Activated CD8-positive, alpha-beta T cell treated with anti-CD3 and anti-CD28 coated beads, Interleukin-2, amount 10 ng/mL, durations not matched to agents 7 days and 5 days (primary cell): ENCODE measurements at regions of chr5 and their contacts with region 1.

Region 1: GRCh38 chr5:96876292-96876850 is at the start of gene ERAP2:
- DNase-seq: no peak
- ATAC-seq: peak; percentile 73
- H3K4me3 Mint-ChIP-seq: peak within 1 kb of the TSS; percentile 98
- H3K27ac Mint-ChIP-seq: peak within 1 kb of the TSS; percentile 94
- H3K4me1 Mint-ChIP-seq: peaks cover 64% of the 10 kb centered on the region
- H3K27me3 Mint-ChIP-seq: no peaks in the 10 kb centered on the region
- total RNA-seq, gene ERAP2: 93.0 to 96.0 TPM

Region 2: GRCh38 chr5:96807075-96807654 is 69.2 kb before region 1 on chr5:
- CTCF ChIA-PET with region 1: interaction called, 12 read pairs
- POLR2A ChIA-PET with region 1: interaction called, 36 read pairs
- DNase-seq: peak; percentile 54
- ATAC-seq: peak; percentile 28
- H3K4me3 Mint-ChIP-seq: peak overlapping the region; percentile 90
- H3K27ac Mint-ChIP-seq: peak overlapping the region; percentile 99
- H3K4me1 Mint-ChIP-seq: peaks cover 73% of the 10 kb centered on the region
- H3K27me3 Mint-ChIP-seq: no peaks in the 10 kb centered on the region

Region 3: DNA sequence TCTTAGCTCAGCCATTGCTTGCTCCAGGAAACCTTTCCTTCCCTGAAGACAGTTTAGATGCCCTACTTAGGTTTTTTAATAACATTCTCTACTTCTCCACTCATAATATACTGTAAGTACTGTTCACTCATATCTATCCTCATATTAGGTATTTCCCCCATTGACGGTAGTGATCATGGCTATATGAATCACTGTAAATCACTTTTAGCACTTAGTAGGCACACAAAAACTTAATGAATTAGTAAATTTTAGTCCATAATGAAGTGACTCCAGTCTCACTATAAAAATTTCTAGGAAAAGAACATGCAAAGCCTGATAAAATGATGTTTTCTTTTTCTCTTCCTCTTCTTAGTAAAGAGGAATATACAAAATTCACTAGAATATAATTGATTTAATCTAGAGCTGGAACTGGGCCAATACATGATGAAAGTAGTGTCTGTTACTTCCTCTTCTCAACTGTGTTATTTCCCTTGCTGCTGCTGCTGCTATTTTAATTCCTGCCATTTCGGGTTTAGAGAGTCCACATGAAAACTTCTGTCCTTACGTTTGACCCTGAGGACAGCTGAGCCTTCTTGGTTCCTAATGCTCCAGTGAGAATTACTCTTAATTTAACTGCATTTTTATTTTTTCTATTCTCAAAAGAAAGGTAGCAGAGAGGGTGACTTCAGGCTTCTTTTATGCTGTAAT is 133.0 kb after region 1 on chr5:
- CTCF ChIA-PET with region 1: no interaction called
- POLR2A ChIA-PET with region 1: no interaction called
- DNase-seq: no peak
- ATAC-seq: no peak
- H3K4me3 Mint-ChIP-seq: no peak overlapping the region
- H3K27ac Mint-ChIP-seq: peak overlapping the region; percentile 53
- H3K4me1 Mint-ChIP-seq: peaks cover 15% of the 10 kb centered on the region
- H3K27me3 Mint-ChIP-seq: no peaks in the 10 kb centered on the region